ENCODE measurements at regions of chr9 and their contacts with region 1.

Region 1: DNA sequence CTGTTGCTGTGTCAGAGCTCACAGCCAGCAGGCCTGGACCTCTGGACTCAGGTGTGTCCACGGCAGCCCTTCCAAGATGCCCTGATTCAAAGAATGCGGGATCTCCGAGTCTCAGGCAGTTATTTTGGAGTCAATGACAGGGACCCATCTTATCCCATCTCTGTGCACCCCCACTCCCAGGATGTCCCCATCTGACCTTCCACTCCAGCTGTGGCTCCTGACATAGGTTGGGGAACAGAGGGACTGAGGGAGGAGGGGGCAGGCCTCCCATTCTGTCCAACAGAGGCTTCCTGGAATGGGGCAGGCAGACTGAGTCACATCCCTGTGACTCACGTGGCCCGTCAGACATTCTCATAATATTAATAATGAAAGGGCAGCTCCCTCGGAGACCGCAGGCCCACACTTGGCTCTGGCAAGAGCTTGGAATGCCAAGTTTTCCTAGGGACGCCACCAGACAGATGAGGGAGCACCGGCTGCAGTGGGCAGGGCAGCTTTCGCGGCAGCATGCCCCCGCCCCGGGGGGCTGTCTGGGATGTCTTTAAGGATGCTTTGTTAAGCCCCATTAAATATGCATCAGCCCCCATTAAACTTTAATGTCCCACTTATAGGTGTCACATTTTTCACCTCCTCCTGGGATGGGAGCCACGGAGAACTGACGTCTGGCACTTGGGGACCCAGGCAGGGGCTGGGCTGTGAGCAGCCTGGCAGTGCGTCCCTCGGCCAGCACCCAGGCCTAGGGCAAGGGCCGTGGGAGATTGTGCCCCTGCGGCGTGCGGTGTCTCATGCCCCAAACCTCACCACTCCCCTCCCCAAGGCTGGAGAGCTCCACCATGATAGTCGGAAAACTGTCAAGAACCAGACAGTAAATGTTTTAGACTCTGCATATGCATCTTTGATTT is 23.6 kb upstream of the FIBCD1 start:
- DNase-seq: peak; percentile 95
- H3K4me3 Mint-ChIP-seq: no peak overlapping the region
- H3K27ac Mint-ChIP-seq: peak overlapping the region; percentile 88
- H3K4me1 Mint-ChIP-seq: peaks cover 24% of the 10 kb centered on the region
- H3K27me3 Mint-ChIP-seq: no peaks in the 10 kb centered on the region
- CTCF ChIP-seq: no peak

Region 2: DNA sequence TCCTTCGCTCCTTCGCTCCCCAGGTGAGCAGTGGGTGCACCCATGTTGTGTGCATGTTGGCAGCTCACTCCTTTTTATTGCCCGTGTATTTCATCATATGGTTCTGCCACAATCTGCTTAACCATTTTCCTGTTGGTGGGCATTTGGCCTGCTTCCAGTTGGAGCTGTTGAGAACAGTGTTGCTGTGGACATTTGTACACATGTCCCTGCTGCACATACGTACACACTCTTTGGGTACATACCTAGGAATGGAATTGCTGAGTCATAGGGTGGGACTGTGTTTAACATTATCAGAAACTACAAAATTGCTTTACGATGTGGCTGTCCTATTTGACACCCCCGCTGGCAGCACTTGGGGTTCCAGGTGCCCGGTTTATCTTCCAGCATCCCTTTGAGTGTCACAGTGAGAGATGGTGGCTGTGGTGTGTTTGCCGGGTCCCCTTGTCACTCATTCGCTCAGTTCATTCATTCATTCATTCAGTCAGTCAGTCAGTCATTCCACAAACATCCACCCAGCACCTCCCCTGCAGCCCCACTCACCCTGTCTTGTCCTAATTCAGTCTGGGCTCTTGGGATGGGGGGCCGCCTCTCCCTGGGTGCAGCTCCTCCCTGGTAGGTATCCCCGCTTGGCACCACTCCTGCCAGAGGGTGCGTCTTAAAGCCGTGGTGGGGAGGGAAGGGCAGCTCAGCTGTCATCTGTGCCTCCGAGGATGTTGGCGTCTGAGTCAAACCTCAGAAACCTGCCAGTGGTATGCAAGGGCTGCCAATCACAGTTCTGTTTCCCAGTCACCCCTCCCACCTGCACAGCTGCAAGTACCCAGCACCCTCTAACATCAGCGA is 15.7 kb before region 1 on chr9:
- CTCF ChIA-PET with region 1: interaction called, 3 read pairs
- POLR2A ChIA-PET with region 1: interaction called, 5 read pairs
- intact Hi-C with region 1: loop called (anchors 2 kb)
- DNase-seq: peak; percentile 71
- H3K4me3 Mint-ChIP-seq: peak overlapping the region; percentile 66
- H3K27ac Mint-ChIP-seq: peak overlapping the region; percentile 93
- H3K4me1 Mint-ChIP-seq: peaks cover 37% of the 10 kb centered on the region
- H3K27me3 Mint-ChIP-seq: no peaks in the 10 kb centered on the region
- CTCF ChIP-seq: no peak

Measured in MCF 10A (cell line).